Prostate gland (tissue), 2 donors: ENCODE measurements at regions of chr12 and their contacts with region 1.

Region 1: GRCh38 chr12:53344824-53345485 is 8.8 kb upstream of the SP7 start:
- DNase-seq: peak; percentile 58
- H3K4me3 ChIP-seq: peak overlapping the region; percentile 45 to 63
- H3K27ac ChIP-seq: peak overlapping the region; percentile 73 to 78
- H3K4me1 ChIP-seq: no peaks in the 10 kb centered on the region
- H3K27me3 ChIP-seq: no peaks in the 10 kb centered on the region
- CTCF ChIP-seq: peak; percentile 37 to 77 (median 70)
- POLR2A ChIP-seq: peak; percentile 35

Region 2: DNA sequence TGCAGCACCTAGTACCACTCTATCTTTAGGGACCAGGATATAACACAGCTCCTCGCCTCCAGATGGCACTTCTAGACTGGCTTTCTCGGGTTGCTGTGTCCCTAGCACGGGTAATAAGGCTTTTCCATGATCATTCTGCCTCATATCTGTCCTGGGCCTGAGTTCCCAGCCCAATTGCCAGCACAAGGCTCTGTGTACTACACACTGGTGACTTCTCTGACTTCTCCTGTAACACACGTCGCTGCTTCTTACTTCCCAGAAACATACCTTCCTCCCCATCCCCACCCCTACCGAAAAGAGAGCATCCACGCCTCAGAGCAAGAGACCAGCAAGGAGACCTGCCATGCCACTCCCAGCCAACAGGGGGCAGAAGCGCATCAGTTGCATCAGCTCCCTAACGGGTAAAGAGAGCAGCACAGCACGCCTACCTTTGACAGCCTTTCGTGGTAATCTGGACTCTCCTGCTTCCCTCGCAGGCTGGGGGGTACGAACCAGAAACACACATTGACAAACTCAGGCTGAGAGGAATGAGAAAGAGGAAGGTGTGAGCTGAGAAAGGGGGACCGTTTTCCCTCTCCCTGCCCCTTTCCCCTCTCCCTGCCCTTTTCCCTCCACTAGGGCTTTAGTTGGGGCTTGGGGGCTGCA is 185.6 kb before region 1 on chr12:
- intact Hi-C with region 1: no loop called
- DNase-seq: peak; percentile 82
- H3K4me3 ChIP-seq: no peak overlapping the region
- H3K27ac ChIP-seq: peak overlapping the region in 1 of 2 donors; percentile 11
- H3K4me1 ChIP-seq: no peaks in the 10 kb centered on the region
- H3K27me3 ChIP-seq: no peaks in the 10 kb centered on the region
- CTCF ChIP-seq: peak; percentile 96 to 98 (median 97)
- POLR2A ChIP-seq: no peak

Region 3: DNA sequence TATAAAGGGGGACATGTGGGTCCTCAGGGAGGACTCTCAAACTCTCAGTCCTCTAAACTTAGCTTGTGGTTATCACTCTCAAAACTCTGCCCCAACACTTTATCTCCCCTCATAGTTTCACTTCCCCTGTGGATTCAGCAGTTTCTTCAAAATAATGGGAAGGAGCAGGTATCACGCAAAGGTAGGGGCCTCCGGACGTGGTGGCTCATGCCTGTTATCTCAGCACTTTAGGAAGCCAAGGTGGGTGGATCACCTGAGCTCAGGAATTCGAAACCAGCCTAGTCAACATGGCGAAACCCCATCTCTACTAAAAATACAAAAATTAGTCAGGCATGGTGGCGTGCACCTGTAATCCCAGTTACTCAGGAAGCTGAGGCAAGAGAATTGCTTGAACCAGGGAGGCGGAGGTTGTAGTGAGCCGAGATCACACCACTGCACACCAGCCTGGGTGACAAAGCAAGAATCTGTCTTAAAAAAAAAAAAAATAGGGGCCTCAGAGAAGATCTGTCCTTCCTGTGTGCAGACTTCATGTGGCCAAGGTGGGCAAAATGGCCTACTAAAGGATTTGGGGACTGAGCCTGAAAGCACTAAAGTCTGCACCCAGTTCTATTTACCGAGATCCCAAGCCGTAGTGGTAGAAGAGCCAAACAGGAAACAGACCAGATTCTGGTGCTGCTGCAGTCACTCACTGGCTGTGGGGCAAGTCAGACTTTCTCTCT is 144.3 kb before region 1 on chr12:
- intact Hi-C with region 1: no loop called
- DNase-seq: no peak
- H3K4me3 ChIP-seq: no peak overlapping the region
- H3K27ac ChIP-seq: no peak overlapping the region
- H3K4me1 ChIP-seq: no peaks in the 10 kb centered on the region
- H3K27me3 ChIP-seq: no peaks in the 10 kb centered on the region
- CTCF ChIP-seq: no peak
- POLR2A ChIP-seq: no peak

Region 4: DNA sequence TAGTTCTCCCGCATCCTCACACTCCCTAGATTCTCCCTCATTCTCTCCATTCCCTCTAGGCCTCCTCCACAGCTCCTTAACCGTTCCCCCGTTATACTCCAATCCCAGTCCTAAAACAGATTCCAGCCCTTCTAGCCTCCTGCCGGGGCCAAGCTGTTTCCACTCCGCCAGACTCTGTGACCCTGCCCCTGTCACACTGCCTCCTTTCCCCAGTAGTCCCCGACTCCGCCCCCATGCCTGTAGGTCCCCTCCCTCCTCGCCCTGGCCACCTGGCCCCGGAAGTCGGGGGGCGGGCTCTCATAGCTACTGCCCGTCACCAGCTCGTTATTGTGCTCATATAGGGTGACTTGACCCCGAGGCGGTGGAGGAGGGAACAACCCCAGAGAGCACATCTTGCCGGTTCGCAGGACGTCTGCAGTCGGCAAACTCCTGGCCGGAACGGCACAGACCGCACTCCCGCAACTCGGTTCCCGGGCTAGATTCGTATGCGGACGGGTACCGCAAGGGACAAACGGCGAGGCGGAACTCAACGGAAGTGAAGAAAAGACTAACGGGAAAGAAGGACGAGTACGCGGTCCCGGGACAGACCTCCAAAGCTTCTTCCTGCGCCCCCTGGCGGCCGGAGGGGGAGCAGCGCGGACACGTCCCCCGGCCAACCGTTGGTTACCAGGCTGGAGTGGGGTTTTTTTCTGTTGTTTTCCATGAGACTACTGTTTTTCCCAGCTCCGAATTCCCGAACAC is 23.7 kb before region 1 on chr12 and contains the start of gene AAAS:
- intact Hi-C with region 1: loop called (anchors 1 kb)
- DNase-seq: peak; percentile 94
- H3K4me3 ChIP-seq: peak within 1 kb of the TSS; percentile 69 to 77
- H3K27ac ChIP-seq: peak within 1 kb of the TSS; percentile 92 to 93
- H3K4me1 ChIP-seq: peaks cover 9% of the 10 kb centered on the region
- H3K27me3 ChIP-seq: no peaks in the 10 kb centered on the region
- CTCF ChIP-seq: peak; percentile 94 to 100 (median 98)
- POLR2A ChIP-seq: peak; percentile 39
- total RNA-seq, gene AAAS: 50.7 to 79.3 TPM

Region 5: GRCh38 chr12:53508534-53509199 is 163.7 kb after region 1 on chr12:
- intact Hi-C with region 1: no loop called
- DNase-seq: peak; percentile 77
- H3K4me3 ChIP-seq: no peak overlapping the region
- H3K27ac ChIP-seq: no peak overlapping the region
- H3K4me1 ChIP-seq: no peaks in the 10 kb centered on the region
- H3K27me3 ChIP-seq: no peaks in the 10 kb centered on the region
- CTCF ChIP-seq: peak; percentile 67 to 92 (median 84)
- POLR2A ChIP-seq: no peak